Prostate gland (tissue), 2 donors: ENCODE measurements at regions of chr7 and their contacts with region 1.

Region 1: DNA sequence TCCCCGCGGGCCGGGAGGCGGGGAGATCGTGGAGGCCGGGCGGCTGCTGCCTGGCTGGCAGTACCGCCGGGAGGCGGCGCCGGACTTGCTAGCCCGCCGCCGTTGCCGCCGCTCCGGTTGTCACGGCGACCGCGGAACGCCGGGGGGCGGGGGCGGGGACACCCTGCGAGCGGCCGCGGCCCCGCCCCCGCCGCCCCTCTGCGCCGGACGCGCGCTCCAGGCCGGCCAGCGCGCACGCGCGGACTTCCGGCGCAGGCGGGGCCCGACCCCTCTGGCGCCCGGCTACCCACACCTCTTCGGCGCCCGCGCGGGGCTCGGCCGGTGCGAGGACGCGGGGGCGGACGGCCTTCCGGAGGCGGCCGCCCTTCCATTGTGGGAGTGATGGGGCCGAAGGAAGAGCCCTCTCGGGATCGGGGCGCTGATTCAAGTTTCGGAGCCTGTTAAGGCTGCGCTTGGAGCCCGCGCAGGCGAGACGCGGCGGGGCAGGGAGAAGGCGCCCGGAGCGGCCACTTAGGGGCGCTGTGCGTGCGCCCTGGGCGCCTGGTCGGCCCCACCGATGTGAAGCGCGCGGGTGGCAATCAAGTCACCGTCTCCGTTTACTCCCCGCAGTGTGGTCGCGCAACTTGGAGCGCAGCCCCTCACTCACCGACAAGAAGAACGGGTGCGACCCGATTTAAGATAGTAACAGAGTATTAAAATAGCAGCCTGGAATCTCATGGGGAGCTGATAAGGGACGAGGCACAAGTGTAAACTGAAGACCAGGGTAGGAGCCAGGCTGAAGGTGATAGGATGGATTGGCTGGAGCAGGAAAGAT is 448 bp upstream of the DPY19L1 start:
- DNase-seq: peak; percentile 93
- H3K4me3 ChIP-seq: peak overlapping the region; percentile 61 to 65
- H3K27ac ChIP-seq: peak overlapping the region; percentile 87 to 90
- H3K4me1 ChIP-seq: no peaks in the 10 kb centered on the region
- H3K27me3 ChIP-seq: no peaks in the 10 kb centered on the region
- CTCF ChIP-seq: peak; percentile 51 to 90 (median 78)
- POLR2A ChIP-seq: no peak

Region 2: DNA sequence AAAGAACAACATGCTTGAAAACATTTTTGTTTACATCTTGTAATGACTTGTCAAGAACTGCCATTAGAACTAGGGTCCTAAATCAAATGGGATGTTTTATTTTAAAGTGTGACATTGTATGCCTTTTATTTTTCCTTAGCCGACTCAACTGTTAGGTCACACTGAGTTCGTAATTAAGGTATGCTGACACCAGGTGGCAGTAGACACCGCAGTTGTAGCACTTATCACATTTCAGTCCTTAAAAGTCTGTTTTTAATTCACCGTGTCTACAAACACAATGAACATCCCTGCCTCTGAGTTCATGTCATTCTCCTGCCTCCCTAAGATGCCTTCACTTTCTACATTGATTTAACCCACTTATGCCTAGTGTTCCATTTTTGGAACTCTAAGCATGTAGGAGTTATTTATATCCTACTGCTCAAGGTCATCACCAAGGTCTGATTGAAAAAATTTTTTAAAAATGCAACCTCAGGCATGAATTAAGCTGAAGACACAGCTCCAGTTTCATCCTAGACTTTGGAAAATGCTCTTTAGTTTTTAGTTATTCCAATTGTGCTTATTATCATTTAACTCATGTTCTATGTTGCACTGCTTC is 946.3 kb before region 1 on chr7:
- intact Hi-C with region 1: loop called (anchors 10 kb)
- DNase-seq: no peak
- H3K4me3 ChIP-seq: no peak overlapping the region
- H3K27ac ChIP-seq: no peak overlapping the region
- H3K4me1 ChIP-seq: no peaks in the 10 kb centered on the region
- H3K27me3 ChIP-seq: no peaks in the 10 kb centered on the region
- CTCF ChIP-seq: peak in 3 of 4 experiments; percentile 36 to 44 (median 43)
- POLR2A ChIP-seq: no peak

Region 3: GRCh38 chr7:34321000-34321581 is 716.6 kb before region 1 on chr7:
- intact Hi-C with region 1: loop called (anchors 5 kb)
- DNase-seq: peak; percentile 72
- H3K4me3 ChIP-seq: no peak overlapping the region
- H3K27ac ChIP-seq: no peak overlapping the region
- H3K4me1 ChIP-seq: no peaks in the 10 kb centered on the region
- H3K27me3 ChIP-seq: no peaks in the 10 kb centered on the region
- CTCF ChIP-seq: peak; percentile 69 to 76 (median 74)
- POLR2A ChIP-seq: no peak

Region 4: DNA sequence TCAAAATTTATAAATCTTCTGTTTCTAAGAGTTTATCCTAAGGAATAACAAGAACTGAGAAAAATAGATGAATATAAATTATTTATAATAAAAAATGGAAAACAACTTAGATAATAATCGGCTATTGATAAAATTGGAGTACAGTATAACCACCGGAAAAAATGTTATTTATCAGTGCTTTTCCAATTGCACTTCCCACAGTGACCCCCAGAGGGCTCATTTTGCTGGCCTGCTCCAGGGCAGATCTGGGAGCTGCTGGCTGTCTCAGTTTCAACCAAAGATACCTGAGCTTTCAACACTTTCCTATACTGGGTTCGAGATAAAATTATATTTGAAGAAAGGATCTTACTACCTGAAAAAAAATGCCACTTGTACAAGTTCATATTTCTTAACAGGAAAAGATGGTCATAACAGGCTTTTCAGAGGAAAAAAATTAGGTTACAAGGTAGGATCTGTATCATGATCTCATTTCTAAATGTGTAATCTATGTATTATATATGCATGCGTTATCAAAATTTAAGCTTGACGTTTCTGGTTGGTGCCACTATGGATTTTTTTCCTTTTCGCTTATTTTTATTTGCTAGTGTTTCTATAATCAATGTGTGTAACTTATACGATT is 214.0 kb before region 1 on chr7:
- intact Hi-C with region 1: loop called (anchors 2 kb)
- DNase-seq: peak; percentile 36
- H3K4me3 ChIP-seq: no peak overlapping the region
- H3K27ac ChIP-seq: no peak overlapping the region
- H3K4me1 ChIP-seq: no peaks in the 10 kb centered on the region
- H3K27me3 ChIP-seq: no peaks in the 10 kb centered on the region
- CTCF ChIP-seq: peak; percentile 35 to 70 (median 59)
- POLR2A ChIP-seq: no peak